ENCODE measurements at regions of chr5 and their contacts with region 1.

Region 1: DNA sequence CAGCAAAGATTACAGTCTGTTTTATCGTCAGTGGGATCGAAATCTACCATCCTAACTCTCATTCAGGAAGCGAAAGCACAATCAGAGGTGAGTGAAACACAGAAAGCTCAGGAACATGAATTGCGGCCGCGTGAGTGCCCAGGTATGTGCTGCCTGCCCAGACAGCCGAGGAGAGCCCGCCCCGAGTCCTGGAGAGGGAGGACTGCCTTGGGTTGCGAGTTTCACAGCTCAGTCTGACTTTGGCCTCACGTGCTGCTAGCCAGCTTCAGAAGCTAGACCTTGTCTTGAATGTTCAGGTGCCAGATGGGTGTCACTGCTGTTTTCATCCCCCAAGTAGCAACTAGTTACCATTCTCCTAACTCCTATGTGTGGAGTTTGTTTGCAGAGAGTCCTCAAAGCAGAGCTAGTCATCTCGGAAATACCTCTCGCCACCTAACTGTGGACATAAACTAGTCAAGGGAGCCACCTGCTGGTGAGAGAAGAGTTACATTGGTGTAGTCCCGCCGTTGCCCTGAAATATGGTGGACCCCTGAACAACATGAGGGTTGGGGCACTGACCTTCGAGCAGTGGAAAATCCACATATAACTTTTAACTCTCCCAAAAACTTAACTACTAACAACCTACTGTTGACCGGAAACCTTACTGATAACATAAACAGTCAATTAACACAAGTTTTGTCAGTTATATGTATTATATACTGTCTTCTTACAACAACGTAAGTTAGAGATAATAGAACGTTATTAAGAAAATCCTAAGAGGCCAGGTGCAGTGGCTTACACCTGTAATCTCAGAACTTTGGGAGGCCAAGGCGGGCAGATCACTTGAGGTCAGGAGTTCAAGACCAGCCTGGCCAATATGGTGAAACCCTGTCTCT is 80.9 kb downstream of the GOLPH3 start:
- DNase-seq: peak; percentile 83 to 86
- H3K4me3 ChIP-seq: no peak overlapping the region
- H3K4me1 ChIP-seq: no peaks in the 10 kb centered on the region
- H3K27me3 ChIP-seq: no peaks in the 10 kb centered on the region

Region 2: GRCh38 chr5:31300501-31300900 is 792.7 kb before region 1 on chr5:
- in situ Hi-C with region 1: no loop called
- DNase-seq: no peak
- H3K4me3 ChIP-seq: no peak overlapping the region
- H3K4me1 ChIP-seq: no peaks in the 10 kb centered on the region
- H3K27me3 ChIP-seq: no peaks in the 10 kb centered on the region

Region 3: DNA sequence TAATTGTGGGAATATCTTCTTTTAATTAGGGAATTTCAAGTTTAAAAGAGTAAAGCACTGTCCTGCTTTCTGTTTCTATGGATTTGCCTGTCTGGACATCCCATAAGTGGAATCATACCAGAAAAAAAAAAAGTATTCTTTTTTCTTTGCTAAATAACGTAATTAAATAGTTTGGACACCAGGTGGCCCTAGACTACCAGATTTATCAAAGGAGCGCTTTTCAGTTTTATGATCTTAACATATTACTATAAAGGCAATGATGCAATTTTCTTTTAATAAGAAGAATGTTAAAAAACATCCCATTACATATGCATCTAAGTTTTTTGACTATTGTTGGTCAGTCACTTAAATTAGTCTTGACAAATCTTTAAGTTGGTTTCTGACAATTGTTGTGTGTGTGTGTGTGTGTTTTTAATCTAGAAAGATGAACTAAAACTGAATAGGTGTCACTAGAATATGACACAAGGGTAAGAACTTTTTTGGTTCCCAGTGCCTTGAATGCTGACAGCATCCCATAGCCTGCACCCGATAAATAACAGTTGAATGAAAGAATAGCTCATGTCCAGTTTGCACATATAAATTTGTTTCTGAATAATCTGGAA is 511.6 kb before region 1 on chr5:
- in situ Hi-C with region 1: loop called (anchors 10 kb)
- DNase-seq: peak; percentile 21 to 50
- H3K4me3 ChIP-seq: no peak overlapping the region
- H3K4me1 ChIP-seq: no peaks in the 10 kb centered on the region
- H3K27me3 ChIP-seq: peaks cover 3% of the 10 kb centered on the region; the same call in 1 of the 2 replicates

Region 4: GRCh38 chr5:32342656-32343055 is 249.5 kb after region 1 on chr5:
- in situ Hi-C with region 1: no loop called
- DNase-seq: no peak
- H3K4me3 ChIP-seq: no peak overlapping the region
- H3K4me1 ChIP-seq: peaks cover 9% of the 10 kb centered on the region
- H3K27me3 ChIP-seq: no peaks in the 10 kb centered on the region